PC-3 (cell line): ENCODE measurements at regions of chr3 and their contacts with region 1.

Region 1: DNA sequence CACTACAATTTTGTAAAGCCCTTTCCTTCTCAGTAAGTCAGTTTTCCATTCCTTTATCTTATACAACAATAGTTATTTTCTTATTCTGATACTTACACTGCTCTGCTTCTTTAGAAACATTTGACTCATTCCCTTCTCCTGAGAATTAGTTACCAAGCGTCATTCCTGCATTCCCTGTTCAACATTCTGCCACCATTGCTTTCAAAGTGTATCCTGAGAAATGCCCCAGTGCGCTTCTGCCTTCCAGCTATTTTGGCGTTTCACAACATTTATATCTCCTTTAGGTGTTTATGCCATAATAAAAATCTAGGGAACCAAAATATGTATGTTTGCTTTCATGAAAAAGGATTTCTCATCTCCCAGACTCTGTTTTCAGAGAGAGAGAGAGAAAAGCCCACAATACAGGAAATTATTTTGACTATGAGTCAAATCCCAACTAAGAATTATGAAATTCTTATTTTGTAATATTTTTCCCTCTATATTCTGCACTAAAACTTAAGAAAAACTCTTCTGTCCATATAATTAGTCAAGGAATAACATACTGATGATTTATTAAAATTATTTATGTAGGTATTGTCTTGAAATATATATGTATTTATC is 118.2 kb upstream of the RAP2B start:
- DNase-seq: peak; percentile 60
- ATAC-seq: peak; percentile 30; the same call in 1 of the 2 replicates
- H3K4me3 ChIP-seq: peak overlapping the region; percentile 48
- H3K27ac ChIP-seq: peak overlapping the region; percentile 60
- H3K4me1 ChIP-seq: peaks cover 30% of the 10 kb centered on the region
- H3K27me3 ChIP-seq: no peaks in the 10 kb centered on the region
- CTCF ChIP-seq: no peak

Region 2: DNA sequence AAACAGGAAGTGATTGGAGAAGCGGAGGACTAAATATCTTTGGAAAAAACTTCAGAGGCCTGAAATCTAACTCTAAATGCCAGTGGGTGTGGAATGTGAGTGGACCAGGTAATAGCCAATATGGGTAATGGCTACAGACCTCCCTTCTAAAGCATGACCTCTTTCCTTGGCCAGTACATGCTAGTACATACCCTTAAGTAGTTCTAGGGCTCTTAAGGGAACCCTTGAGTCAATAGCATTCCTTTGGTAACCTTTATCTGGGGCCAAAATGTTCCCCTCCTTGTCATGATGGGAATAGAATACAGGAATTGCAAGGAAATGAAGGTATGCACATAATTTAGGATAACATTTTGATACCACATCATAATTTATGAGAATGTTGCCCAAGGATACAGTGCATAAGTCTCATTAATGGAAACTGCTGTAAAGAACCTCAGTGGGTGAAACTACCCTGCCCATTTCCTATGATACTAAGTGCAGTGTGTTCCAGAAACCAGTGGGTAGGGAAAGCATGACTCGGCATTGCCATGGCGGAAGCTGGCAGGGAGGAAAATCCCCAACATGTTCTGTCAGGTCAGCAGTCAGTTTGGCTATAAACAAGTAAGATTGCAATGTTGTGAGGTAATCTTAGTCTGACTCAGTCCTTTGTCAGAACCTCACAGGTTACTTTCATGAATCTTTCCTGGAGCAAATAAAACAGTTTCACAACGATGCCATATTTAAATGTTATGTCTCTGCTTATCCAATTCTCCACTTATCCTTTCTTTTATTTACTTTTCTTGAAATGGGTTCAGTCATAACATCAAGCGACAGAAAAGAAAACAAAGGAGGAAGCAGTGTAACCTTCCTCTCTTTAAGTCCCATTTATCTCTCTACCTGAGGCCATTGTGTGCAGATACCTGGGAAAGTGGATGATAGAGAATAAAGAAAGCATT is 94.7 kb after region 1 on chr3:
- CTCF ChIA-PET with region 1: interaction called, 4 read pairs
- POLR2A ChIA-PET with region 1: no interaction called
- intact Hi-C with region 1: loop called (anchors 1 kb)
- DNase-seq: peak; percentile 98
- ATAC-seq: peak; percentile 70
- H3K4me3 ChIP-seq: no peak overlapping the region; the same call in 1 of the 2 replicates
- H3K27ac ChIP-seq: peak overlapping the region; percentile 98
- H3K4me1 ChIP-seq: peaks cover 57% of the 10 kb centered on the region
- H3K27me3 ChIP-seq: no peaks in the 10 kb centered on the region
- CTCF ChIP-seq: no peak

Region 3: DNA sequence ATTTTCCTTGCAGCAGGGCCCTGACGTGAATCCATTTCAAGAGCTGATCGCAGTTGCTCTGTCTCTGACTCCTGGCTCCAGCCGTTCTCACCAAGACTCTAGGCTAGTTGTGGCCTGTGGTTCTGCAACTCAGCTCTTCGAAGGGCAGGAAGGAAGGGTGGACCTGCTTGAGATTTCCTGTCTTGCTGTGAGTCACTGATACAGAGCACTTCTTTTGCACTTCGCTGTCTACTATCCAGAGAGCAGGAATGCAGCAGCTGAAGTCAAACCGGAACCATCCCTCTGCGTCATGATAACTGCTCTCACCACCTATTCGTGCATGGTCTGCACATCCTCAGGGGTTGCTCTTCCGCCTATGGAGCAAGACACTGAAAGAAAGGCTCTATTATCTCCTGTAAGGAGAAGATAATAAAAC is 177.9 kb after region 1 on chr3:
- CTCF ChIA-PET with region 1: interaction called, 3 read pairs
- POLR2A ChIA-PET with region 1: no interaction called
- intact Hi-C with region 1: loop called (anchors 1 kb)
- DNase-seq: peak; percentile 97
- ATAC-seq: peak; percentile 96
- H3K4me3 ChIP-seq: peak overlapping the region; percentile 13; the same call in 1 of the 2 replicates
- H3K27ac ChIP-seq: peak overlapping the region; percentile 89
- H3K4me1 ChIP-seq: peaks cover 24% of the 10 kb centered on the region
- H3K27me3 ChIP-seq: no peaks in the 10 kb centered on the region
- CTCF ChIP-seq: no peak

Region 4: GRCh38 chr3:153443961-153444360 is 400.1 kb after region 1 on chr3:
- CTCF ChIA-PET with region 1: interaction called, 3 read pairs
- POLR2A ChIA-PET with region 1: no interaction called
- intact Hi-C with region 1: loop called (anchors 1 kb)
- DNase-seq: peak; percentile 65
- ATAC-seq: no peak
- H3K4me3 ChIP-seq: no peak overlapping the region
- H3K27ac ChIP-seq: no peak overlapping the region
- H3K4me1 ChIP-seq: no peaks in the 10 kb centered on the region
- H3K27me3 ChIP-seq: no peaks in the 10 kb centered on the region
- CTCF ChIP-seq: peak; percentile 72